Right cardiac atrium (tissue), 5 donors: ENCODE measurements at regions of chr1 and their contacts with region 1.

Region 1: DNA sequence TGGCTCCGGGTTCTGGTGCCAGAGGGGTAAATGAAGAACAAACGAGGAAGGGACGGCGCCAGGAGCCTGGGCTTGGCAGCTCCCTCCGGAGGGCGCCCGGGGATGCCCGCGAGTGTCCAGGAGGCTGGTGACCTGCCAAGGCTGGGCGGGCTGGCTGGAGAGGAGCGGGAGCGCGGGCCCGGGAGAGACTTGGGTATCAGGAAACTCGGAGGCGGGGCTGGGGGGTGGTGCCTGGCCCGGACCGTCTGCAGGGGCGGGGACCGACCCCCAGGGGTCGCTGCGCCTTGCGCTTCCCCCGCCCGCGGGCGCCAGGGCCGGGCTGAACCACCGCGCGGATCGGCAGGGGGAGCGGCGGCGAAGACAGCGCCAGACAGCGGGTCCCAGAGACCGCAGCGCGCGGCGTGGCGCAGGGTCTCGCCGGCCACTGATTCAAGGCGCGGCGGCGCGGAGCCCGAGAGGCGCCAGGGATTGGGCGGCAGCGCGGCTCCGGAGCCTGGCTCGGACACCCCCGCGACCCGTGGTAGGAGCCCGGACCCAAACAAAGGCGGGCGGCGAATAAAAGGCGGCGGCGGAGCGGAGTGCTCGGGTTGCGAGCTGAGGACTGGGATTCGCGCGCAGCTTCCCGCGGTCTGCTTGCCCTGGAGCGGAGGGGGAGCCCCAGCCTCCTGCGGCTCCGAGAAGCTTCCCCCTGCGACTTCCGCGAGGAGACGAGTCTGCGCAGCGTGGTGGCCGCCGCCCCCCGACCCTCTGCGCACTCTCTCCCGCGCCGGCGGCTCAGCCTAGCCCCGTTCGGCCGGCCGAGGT is at the start of gene DISP3:
- DNase-seq: peak; percentile 56 to 81 (median 71)
- ATAC-seq: peak; percentile 56 to 86
- H3K4me3 ChIP-seq: peak within 1 kb of the TSS; percentile 15
- H3K27ac ChIP-seq: no peak within 1 kb of the TSS
- H3K4me1 ChIP-seq: no peaks in the 10 kb centered on the region
- H3K27me3 ChIP-seq: peaks cover 4% of the 10 kb centered on the region
- total RNA-seq, gene DISP3: 0.06 TPM in 1 of 4 donors, not detected in the others

Region 2: GRCh38 chr1:11563560-11564069 is 84.8 kb after region 1 on chr1:
- intact Hi-C with region 1: no loop called
- DNase-seq: no peak
- ATAC-seq: no peak
- H3K4me3 ChIP-seq: no peak overlapping the region
- H3K27ac ChIP-seq: no peak overlapping the region
- H3K4me1 ChIP-seq: no peaks in the 10 kb centered on the region
- H3K27me3 ChIP-seq: no peaks in the 10 kb centered on the region

Region 3: DNA sequence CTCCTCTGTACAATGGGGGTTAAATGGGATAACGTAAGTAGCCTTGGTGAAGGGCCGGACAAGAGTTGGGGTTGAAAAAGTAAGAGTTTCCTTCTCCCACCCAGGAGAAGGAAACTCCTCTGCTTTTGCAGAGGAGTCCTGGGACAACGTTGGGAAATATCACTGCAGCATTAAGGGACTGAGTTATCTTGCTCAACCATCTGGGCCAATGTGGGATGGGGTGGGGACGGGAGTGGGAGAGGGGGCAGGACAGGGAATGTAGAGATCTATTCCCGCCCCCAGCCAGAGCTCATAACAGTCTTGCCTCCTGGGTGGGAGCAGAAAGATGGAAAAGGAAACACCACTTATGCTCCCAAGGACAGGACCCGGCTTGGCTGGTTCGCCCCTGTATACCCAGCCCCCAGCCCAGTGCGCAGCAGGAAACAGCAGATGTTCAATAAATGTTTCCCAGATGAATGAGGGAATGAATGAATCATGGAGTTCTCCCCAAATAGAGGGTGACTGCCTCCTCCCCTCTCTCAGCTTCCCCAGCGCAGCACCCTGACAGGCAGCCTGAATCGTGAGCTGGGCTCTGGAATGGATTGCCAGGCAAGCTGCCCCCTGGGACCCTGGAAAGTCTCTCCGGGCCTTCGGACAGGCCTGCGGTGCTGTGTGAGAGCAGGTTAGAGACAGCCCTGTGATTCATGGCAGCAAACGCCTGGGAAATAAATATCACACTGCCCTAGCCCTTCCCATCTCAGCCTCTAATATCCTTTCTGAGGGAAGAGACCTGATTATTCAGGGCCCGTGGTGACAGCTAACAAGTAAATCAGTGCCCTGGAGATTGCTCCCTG is 150.6 kb after region 1 on chr1:
- intact Hi-C with region 1: loop called in 2 of 4 experiments (anchors 10 kb)
- DNase-seq: no peak
- ATAC-seq: no peak
- H3K4me3 ChIP-seq: no peak overlapping the region
- H3K27ac ChIP-seq: no peak overlapping the region
- H3K4me1 ChIP-seq: no peaks in the 10 kb centered on the region
- H3K27me3 ChIP-seq: no peaks in the 10 kb centered on the region